Uterus (tissue), 4 donors: ENCODE measurements at regions of chr1 and their contacts with region 1.

Region 1: DNA sequence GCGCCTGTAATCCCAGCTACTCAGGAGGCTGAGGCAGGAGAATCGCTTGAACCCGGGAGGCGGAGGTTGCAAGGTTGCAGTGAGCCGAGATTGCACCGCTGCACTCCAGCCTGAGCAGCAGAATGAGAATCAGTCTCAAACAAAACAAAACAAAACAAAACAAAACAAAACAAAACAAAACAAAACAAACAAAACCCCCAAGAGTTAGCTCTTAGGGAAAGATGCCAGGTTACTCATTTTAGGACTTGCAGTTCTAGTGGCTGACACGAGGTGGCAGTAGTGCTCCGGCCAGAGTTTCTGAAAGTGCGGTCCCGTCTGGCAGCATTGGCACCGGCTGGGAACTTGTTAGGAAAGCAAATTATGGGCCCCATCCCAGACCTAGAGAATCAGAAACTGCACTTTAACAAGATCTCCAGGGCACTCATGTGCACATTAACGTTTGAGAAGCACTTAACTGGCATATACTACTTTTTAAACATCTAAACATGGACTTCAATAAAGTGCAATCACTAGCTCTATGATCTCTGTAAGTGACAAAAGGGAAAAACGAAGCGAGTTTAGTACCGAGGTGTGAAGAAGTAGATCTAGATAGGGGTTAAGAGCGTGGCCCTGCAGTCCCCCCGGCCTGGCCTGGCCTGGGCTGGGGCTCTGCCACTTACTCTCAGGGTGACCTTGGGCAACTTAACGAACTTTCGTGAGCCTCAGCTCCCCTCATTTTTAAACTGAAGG is 41.9 kb upstream of the TNFRSF1B start:
- DNase-seq: peak; percentile 80 to 83
- H3K4me3 ChIP-seq: no peak overlapping the region
- H3K27ac ChIP-seq: peak overlapping the region in 1 of 2 donors; percentile 1
- H3K4me1 ChIP-seq: no peaks in the 10 kb centered on the region
- H3K27me3 ChIP-seq: no peaks in the 10 kb centered on the region
- CTCF ChIP-seq: peak; percentile 92 to 98 (median 97)
- POLR2A ChIP-seq: no peak

Region 2: GRCh38 chr1:12196641-12197482 is 72.0 kb after region 1 on chr1:
- intact Hi-C with region 1: no loop called
- DNase-seq: no peak
- H3K4me3 ChIP-seq: no peak overlapping the region
- H3K27ac ChIP-seq: no peak overlapping the region
- H3K4me1 ChIP-seq: no peaks in the 10 kb centered on the region
- H3K27me3 ChIP-seq: no peaks in the 10 kb centered on the region
- CTCF ChIP-seq: no peak
- POLR2A ChIP-seq: no peak

Region 3: GRCh38 chr1:12208764-12209494 is 84.1 kb after region 1 on chr1:
- intact Hi-C with region 1: loop called (anchors 2 kb)
- DNase-seq: peak; percentile 87 to 88
- H3K4me3 ChIP-seq: no peak overlapping the region
- H3K27ac ChIP-seq: peak overlapping the region in 1 of 2 donors; percentile 26
- H3K4me1 ChIP-seq: no peaks in the 10 kb centered on the region
- H3K27me3 ChIP-seq: no peaks in the 10 kb centered on the region
- CTCF ChIP-seq: peak; percentile 91 to 97 (median 95)
- POLR2A ChIP-seq: no peak